GM12878 (cell line): ENCODE measurements at regions of chr1 and their contacts with region 1.

Region 1: GRCh38 chr1:96945509-96946084 is 224.0 kb downstream of the PTBP2 start:
- DNase-seq: no peak
- ATAC-seq: peak; percentile 59
- H3K4me3 ChIP-seq: no peak overlapping the region
- H3K27ac ChIP-seq: no peak overlapping the region
- H3K4me1 ChIP-seq: no peaks in the 10 kb centered on the region
- H3K27me3 ChIP-seq: no peaks in the 10 kb centered on the region; a peak in 1 of 4 replicates
- CTCF ChIP-seq: no peak
- EP300 ChIP-seq: no peak
- POLR2A ChIP-seq: no peak
- RAD21 ChIP-seq: no peak

Region 2: GRCh38 chr1:96901783-96902363 is 43.7 kb before region 1 on chr1:
- CTCF ChIA-PET with region 1: no interaction called
- POLR2A ChIA-PET with region 1: no interaction called
- RAD21 ChIA-PET with region 1: no interaction called
- SMC1A ChIA-PET with region 1: interaction called, 3 read pairs
- in situ Hi-C with region 1: no loop called
- intact Hi-C with region 1: loop called (anchors 5 kb)
- DNase-seq: no peak
- ATAC-seq: no peak
- H3K4me3 ChIP-seq: no peak overlapping the region
- H3K27ac ChIP-seq: no peak overlapping the region
- H3K4me1 ChIP-seq: no peaks in the 10 kb centered on the region
- H3K27me3 ChIP-seq: no peaks in the 10 kb centered on the region
- CTCF ChIP-seq: no peak
- EP300 ChIP-seq: no peak
- POLR2A ChIP-seq: no peak
- RAD21 ChIP-seq: no peak

Region 3: DNA sequence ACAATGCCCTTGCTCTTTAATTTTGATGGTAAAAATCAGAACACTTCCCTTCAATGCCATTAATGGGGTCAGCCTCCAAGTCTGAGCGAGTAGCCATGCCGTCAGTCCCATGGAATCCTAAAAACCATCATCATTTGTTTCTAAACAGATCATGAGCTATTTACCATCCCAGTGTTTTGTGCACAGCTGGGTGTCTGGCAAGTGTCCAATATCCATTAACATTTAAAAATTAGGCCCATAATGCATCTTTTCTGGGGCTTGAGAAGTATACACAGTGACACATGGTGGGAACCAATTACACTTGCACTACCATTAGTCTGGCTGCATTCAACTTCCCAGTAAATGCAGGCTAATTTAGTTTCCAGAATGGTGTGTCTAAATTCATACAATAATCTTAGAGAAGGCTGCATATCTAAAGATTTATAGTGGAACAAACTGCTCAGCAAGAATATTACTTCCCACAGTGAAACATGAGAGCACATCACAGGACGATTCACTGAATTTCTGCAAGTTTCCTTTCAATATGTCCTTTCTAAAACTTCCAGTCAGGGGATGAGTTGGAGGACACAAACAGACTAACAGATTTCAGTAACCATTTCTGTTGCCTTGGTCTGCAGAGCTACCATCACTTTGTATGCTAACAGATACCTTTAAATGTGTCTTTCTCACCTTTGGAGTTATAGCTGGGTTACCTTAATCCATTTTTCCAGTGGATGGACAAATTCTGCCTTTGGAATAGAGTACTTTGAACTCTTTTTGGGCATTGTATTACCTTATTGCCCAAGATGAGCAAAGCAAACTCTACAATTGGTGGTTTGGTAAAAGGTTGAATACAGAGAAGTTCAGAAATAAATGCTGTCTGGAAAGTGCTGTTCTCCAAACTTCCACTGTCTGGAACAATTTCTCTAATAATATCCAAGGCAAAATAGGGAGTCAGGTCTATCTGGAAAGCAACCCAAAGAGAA is 34.0 kb after region 1 on chr1:
- CTCF ChIA-PET with region 1: no interaction called
- POLR2A ChIA-PET with region 1: no interaction called
- RAD21 ChIA-PET with region 1: no interaction called
- SMC1A ChIA-PET with region 1: no interaction called
- in situ Hi-C with region 1: no loop called
- intact Hi-C with region 1: no loop called
- DNase-seq: no peak
- ATAC-seq: no peak
- H3K4me3 ChIP-seq: no peak overlapping the region
- H3K27ac ChIP-seq: no peak overlapping the region
- H3K4me1 ChIP-seq: no peaks in the 10 kb centered on the region
- H3K27me3 ChIP-seq: no peaks in the 10 kb centered on the region
- CTCF ChIP-seq: no peak
- EP300 ChIP-seq: no peak
- POLR2A ChIP-seq: no peak
- RAD21 ChIP-seq: no peak